ENCODE measurements at regions of chr4 and their contacts with region 1.

Region 1: GRCh38 chr4:42750091-42750490 is 93.2 kb upstream of the ATP8A1 start:
- DNase-seq: peak; percentile 58
- H3K4me3 Mint-ChIP-seq: no peak overlapping the region
- H3K27ac Mint-ChIP-seq: no peak overlapping the region
- H3K4me1 Mint-ChIP-seq: peaks cover 3% of the 10 kb centered on the region
- H3K27me3 Mint-ChIP-seq: no peaks in the 10 kb centered on the region

Region 2: DNA sequence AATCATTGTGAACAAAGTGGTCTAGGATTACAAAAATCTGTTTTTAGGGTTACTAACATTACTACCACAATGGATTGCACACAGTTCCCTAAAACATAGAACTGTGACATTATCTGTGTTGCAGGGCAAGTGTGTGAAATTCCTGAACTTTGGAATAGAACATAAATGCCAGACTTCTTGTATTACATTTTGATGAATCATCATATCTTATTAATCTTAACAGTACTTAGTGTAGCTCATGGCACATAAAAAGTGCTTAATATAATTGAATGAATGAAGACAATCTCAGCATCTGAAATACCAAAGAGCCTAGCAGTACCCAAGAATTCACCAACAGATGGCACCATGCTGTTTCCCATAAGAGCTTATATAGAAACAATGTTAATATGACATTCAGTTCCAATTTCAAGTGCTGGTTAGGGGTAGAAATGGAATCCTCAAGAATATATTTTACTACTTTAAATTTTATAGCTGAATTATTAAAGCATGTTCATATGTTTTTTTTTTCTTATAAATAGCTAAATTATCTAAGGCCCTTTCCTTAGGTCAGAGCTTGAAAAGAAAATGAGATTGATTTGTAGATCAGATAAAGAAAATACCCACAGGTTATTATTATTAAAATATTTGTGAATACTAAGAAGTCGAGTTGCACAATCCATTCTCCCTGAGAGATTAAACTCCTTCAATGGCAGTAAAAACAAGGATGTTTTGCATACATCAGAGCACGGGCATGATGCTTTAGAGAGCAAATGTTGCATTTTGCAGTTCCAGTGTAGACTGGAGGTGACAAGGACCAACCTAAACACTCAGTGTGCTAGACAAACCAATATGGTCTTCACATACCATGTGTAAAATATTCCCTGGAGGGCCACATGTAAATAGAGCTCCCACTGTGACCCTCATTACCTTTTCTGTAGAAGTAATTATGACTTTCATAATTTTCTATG is 378.5 kb before region 1 on chr4:
- CTCF ChIA-PET with region 1: interaction called, 3 read pairs
- intact Hi-C with region 1: loop called (anchors 1 kb)
- DNase-seq: peak; percentile 17
- H3K4me3 Mint-ChIP-seq: no peak overlapping the region
- H3K27ac Mint-ChIP-seq: no peak overlapping the region
- H3K4me1 Mint-ChIP-seq: no peaks in the 10 kb centered on the region
- H3K27me3 Mint-ChIP-seq: peaks cover 18% of the 10 kb centered on the region